ENCODE measurements at regions of chr6 and their contacts with region 1.

Region 1: GRCh38 chr6:10112871-10113549 is 301.9 kb downstream of the TFAP2A start:
- DNase-seq: no peak
- H3K4me3 ChIP-seq: no peak overlapping the region
- H3K27ac ChIP-seq: no peak overlapping the region
- H3K4me1 ChIP-seq: no peaks in the 10 kb centered on the region
- H3K27me3 ChIP-seq: no peaks in the 10 kb centered on the region
- CTCF ChIP-seq: no peak

Region 2: DNA sequence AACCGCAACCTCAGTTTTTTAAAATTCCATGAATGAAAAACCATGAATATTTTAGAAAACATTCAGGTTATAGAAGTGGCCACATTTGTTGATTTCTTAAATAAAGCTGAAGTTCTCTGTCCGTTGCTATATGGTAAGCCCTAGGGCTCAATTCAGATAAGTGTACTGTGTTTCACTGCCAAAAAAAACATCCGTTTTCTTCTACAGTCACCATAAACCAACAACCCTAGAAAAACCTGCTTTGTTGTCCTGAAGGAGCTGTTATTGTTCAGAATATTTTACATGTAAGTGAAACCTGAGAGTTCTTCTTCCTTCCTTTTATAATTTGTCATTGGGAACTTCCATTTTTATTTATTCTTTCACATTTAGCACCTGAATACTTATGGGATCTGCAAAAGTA is 27.8 kb after region 1 on chr6:
- CTCF ChIA-PET with region 1: no interaction called
- POLR2A ChIA-PET with region 1: interaction called, 12 read pairs
- intact Hi-C with region 1: no loop called
- DNase-seq: peak in 1 of 2 experiments; percentile 74
- H3K4me3 ChIP-seq: no peak overlapping the region
- H3K27ac ChIP-seq: no peak overlapping the region
- H3K4me1 ChIP-seq: peaks cover 23% of the 10 kb centered on the region
- H3K27me3 ChIP-seq: no peaks in the 10 kb centered on the region
- CTCF ChIP-seq: no peak